Body of pancreas (tissue), 4 donors: ENCODE measurements at regions of chr3 and their contacts with region 1.

Region 1: DNA sequence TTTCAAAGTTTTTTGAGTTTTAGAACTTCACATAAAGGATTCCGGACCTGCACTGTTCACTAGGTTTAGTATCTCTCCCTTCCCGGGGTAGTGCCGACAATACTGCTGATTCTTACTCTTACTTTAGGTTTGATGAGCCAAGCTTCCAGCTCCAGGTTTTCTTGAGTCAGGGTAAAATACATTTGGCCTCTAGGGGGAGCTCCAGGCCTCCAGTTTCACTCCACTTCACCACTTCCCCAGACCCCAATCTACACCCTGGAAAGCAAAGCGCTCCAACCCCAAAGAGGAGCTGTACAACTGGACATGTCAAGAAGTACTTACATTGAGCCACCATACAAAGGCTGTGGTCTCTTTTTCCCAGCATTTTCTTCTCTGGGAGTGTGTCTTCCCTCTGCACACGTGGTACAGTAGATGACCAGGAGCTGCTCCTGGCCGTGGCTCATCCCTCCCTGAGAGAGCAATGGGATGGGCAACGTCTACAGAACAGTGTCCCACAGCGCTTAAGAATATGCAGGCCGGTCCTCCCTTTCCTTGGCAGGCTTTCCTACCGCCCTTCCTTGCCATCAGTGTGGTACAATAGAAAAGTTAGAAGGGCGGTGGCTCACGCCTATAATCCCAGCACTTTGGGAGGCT is 93.9 kb upstream of the CCDC80 start:
- DNase-seq: peak; percentile 51 to 66 (median 58)
- ATAC-seq: no peak
- H3K4me3 ChIP-seq: no peak overlapping the region
- H3K27ac ChIP-seq: no peak overlapping the region
- H3K4me1 ChIP-seq: no peaks in the 10 kb centered on the region
- H3K27me3 ChIP-seq: no peaks in the 10 kb centered on the region
- CTCF ChIP-seq: peak; percentile 44 to 68 (median 59)
- POLR2A ChIP-seq: no peak

Region 2: DNA sequence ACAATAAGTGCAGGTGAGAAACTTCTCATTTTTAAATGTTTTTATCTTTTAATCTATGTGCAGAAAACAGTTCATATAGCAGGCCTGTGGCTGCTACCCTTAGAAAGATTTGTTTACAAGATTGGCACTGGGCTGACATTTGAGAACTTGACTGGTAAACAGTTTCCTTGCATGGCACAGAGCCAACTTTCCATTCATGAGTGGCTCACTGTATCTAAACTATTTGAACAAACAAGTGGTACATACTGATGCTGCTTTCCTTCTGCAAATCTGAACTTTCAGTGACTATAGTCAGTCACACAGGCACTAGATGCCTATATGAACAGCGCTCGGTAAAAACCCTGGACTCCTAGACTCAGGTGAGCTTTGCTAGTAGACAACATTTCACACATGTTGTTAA is 249.7 kb after region 1 on chr3:
- intact Hi-C with region 1: loop called (anchors 5 kb)
- DNase-seq: peak in 2 of 4 donors; percentile 14 to 16
- ATAC-seq: no peak
- H3K4me3 ChIP-seq: no peak overlapping the region
- H3K27ac ChIP-seq: peak overlapping the region in 1 of 4 donors; percentile 17
- H3K4me1 ChIP-seq: no peaks in the 10 kb centered on the region
- H3K27me3 ChIP-seq: no peaks in the 10 kb centered on the region
- CTCF ChIP-seq: no peak
- POLR2A ChIP-seq: no peak

Region 3: GRCh38 chr3:113136071-113136470 is 401.2 kb after region 1 on chr3:
- intact Hi-C with region 1: no loop called
- DNase-seq: no peak
- ATAC-seq: peak; percentile 50
- H3K4me3 ChIP-seq: no peak overlapping the region
- H3K27ac ChIP-seq: no peak overlapping the region
- H3K4me1 ChIP-seq: no peaks in the 10 kb centered on the region
- H3K27me3 ChIP-seq: no peaks in the 10 kb centered on the region
- CTCF ChIP-seq: peak in 6 of 7 experiments; percentile 42 to 79 (median 63)
- POLR2A ChIP-seq: no peak